Common myeloid progenitor, CD34-positive (primary cell): ENCODE measurements at regions of chr2 and their contacts with region 1.

Region 1: GRCh38 chr2:44479122-44479887 is 117.6 kb downstream of the CAMKMT start:
- DNase-seq: peak; percentile 80 to 88 (median 87)
- H3K4me3 ChIP-seq: no peak overlapping the region
- H3K27ac ChIP-seq: no peak overlapping the region
- H3K4me1 ChIP-seq: peaks cover 0 to 4% (median 0%) of the 10 kb centered on the region in 4 experiments
- H3K27me3 ChIP-seq: no peaks in the 10 kb centered on the region

Region 2: DNA sequence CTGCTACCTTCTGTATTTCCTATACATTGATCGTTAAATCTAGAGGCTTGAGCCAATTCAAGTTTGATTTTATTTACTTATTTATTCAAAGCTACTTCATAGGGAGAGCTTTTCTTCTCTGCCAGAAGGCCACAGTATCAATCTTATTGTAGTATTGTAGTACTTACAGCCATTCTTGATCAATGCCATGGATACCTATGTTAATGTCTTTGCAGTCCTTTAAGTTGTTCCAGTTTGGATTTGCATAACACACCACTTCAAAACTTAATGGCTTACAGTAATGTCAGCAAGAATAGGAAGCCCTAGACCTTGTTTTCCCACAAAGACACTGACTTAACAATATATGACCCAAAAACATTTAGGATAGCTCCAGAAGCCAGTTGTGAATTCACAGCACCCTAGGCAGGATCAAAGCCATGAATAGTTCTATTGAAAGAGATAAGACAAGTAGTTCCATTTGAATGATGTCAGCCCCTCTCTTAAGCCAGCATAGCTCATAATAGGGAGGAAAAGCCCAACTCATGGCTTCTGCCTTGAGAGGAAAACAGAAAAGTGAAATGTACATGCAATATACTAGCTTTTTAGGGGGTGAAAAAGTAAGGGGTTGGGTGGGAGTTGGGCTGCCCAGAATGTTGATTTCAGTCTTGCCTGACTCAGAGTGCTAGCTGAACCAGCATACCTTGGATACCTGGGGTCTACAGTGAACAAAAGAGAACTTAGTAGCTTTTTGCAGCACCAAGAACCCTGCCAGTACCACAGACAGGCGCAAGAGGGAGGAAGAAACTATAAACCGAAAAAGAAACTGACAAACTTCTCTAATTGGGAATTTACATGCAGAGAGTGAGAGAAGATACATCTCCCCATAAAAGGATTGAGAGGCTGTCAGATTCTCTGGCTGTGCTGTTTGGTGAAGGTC is 16.1 kb before region 1 on chr2:
- CTCF ChIA-PET with region 1: interaction called, 11 read pairs
- POLR2A ChIA-PET with region 1: no interaction called
- DNase-seq: no peak
- H3K4me3 ChIP-seq: no peak overlapping the region
- H3K27ac ChIP-seq: no peak overlapping the region
- H3K4me1 ChIP-seq: no peaks in the 10 kb centered on the region
- H3K27me3 ChIP-seq: no peaks in the 10 kb centered on the region